Natural killer cell (primary cell): ENCODE measurements at regions of chr19 and their contacts with region 1.

Region 1: GRCh38 chr19:7943444-7944176 is at the start of gene TIMM44:
- DNase-seq: peak; percentile 98 to 99
- ATAC-seq: peak; percentile 93 to 98 (median 94)
- H3K4me3 ChIP-seq: peak within 1 kb of the TSS; percentile 91
- H3K4me3 Mint-ChIP-seq: peak within 1 kb of the TSS; percentile 95
- H3K27ac ChIP-seq: peak within 1 kb of the TSS; percentile 97
- H3K27ac Mint-ChIP-seq: peak within 1 kb of the TSS; percentile 98 to 100
- H3K4me1 ChIP-seq: peaks cover 20% of the 10 kb centered on the region
- H3K4me1 Mint-ChIP-seq: peaks cover 15 to 34% of the 10 kb centered on the region in 2 donors
- H3K27me3 ChIP-seq: no peaks in the 10 kb centered on the region
- H3K27me3 Mint-ChIP-seq: peaks cover 0 to 4% of the 10 kb centered on the region in 2 donors
- CTCF ChIP-seq: no peak
- total RNA-seq, gene TIMM44: 83.3 to 116 (median 89.4) TPM

Region 2: GRCh38 chr19:7903244-7904073 is 40.2 kb before region 1 on chr19 and contains the start of gene MAP2K7:
- intact Hi-C with region 1: loop called (anchors 1 kb)
- DNase-seq: peak; percentile 100
- ATAC-seq: peak; percentile 71 to 87 (median 72)
- H3K4me3 ChIP-seq: peak within 1 kb of the TSS; percentile 62
- H3K4me3 Mint-ChIP-seq: peak within 1 kb of the TSS; percentile 93
- H3K27ac ChIP-seq: peak within 1 kb of the TSS; percentile 88
- H3K27ac Mint-ChIP-seq: peak within 1 kb of the TSS; percentile 95 to 99
- H3K4me1 ChIP-seq: peaks cover 32% of the 10 kb centered on the region
- H3K4me1 Mint-ChIP-seq: peaks cover 20 to 47% of the 10 kb centered on the region in 2 donors
- H3K27me3 ChIP-seq: no peaks in the 10 kb centered on the region
- H3K27me3 Mint-ChIP-seq: peaks cover 0 to 3% of the 10 kb centered on the region in 2 donors
- CTCF ChIP-seq: peak; percentile 57
- total RNA-seq, gene MAP2K7: 131 to 218 (median 159) TPM

Region 3: GRCh38 chr19:7925171-7925851 is 18.3 kb before region 1 on chr19:
- intact Hi-C with region 1: loop called (anchors 2 kb)
- DNase-seq: peak; percentile 80 to 91
- ATAC-seq: peak; percentile 11 to 22 (median 16)
- H3K4me3 ChIP-seq: no peak overlapping the region
- H3K4me3 Mint-ChIP-seq: peak overlapping the region; percentile 85
- H3K27ac ChIP-seq: no peak overlapping the region
- H3K27ac Mint-ChIP-seq: peak overlapping the region in 1 of 2 donors; percentile 74
- H3K4me1 ChIP-seq: peaks cover 35% of the 10 kb centered on the region
- H3K4me1 Mint-ChIP-seq: peaks cover 7 to 35% of the 10 kb centered on the region in 2 donors
- H3K27me3 ChIP-seq: no peaks in the 10 kb centered on the region
- H3K27me3 Mint-ChIP-seq: no peaks in the 10 kb centered on the region
- CTCF ChIP-seq: peak; percentile 83

Region 4: GRCh38 chr19:7973883-7974282 is 30.3 kb after region 1 on chr19:
- intact Hi-C with region 1: no loop called
- DNase-seq: no peak
- ATAC-seq: no peak
- H3K4me3 ChIP-seq: no peak overlapping the region
- H3K4me3 Mint-ChIP-seq: no peak overlapping the region
- H3K27ac ChIP-seq: no peak overlapping the region
- H3K27ac Mint-ChIP-seq: no peak overlapping the region
- H3K4me1 ChIP-seq: no peaks in the 10 kb centered on the region
- H3K4me1 Mint-ChIP-seq: no peaks in the 10 kb centered on the region
- H3K27me3 ChIP-seq: no peaks in the 10 kb centered on the region
- H3K27me3 Mint-ChIP-seq: no peaks in the 10 kb centered on the region
- CTCF ChIP-seq: no peak

Region 5: GRCh38 chr19:8001995-8002849 is 58.6 kb after region 1 on chr19:
- intact Hi-C with region 1: loop called (anchors 1 kb)
- DNase-seq: peak; percentile 77 to 82
- ATAC-seq: peak; percentile 61 to 76 (median 63)
- H3K4me3 ChIP-seq: peak overlapping the region; percentile 26
- H3K4me3 Mint-ChIP-seq: peak overlapping the region; percentile 87
- H3K27ac ChIP-seq: peak overlapping the region; percentile 67
- H3K27ac Mint-ChIP-seq: peak overlapping the region; percentile 93 to 95
- H3K4me1 ChIP-seq: peaks cover 50% of the 10 kb centered on the region
- H3K4me1 Mint-ChIP-seq: peaks cover 43% of the 10 kb centered on the region in 2 donors
- H3K27me3 ChIP-seq: no peaks in the 10 kb centered on the region
- H3K27me3 Mint-ChIP-seq: no peaks in the 10 kb centered on the region
- CTCF ChIP-seq: peak; percentile 98

Region 6: DNA sequence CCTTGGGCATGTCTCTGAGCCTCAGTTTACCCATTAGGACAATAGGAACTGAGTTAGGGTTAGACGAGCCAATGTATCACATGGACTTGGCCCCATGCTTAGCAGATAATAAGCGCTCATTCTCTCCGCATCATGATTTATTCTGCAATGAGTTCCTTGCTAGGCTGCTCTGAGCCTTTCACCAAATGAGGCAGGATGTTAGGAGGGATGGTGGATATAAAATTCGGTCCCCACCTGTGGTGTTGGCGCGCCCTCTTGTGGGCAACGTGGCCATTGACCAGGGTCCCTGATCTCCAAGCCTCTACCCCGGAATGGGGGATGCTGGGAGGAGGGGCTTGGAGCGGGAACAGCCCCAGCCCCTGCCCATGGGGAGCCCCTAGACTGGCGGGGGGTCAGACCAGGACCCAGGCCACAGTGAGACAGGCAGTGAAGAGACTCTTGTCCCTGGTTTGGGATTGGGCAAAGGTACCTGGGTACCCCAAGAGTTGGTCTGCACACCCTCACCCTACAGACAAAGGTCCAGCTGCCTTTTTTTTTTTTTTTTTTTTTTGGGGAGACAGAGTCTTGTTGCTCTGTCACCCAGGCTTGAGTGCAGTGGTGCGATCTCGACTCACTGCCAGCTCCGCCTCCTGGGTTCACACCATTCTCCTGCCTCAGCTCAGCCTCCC is 309.4 kb after region 1 on chr19:
- intact Hi-C with region 1: loop called (anchors 1 kb)
- DNase-seq: peak; percentile 86 to 90
- ATAC-seq: peak; percentile 85 to 98 (median 95)
- H3K4me3 ChIP-seq: no peak overlapping the region
- H3K4me3 Mint-ChIP-seq: no peak overlapping the region
- H3K27ac ChIP-seq: no peak overlapping the region
- H3K27ac Mint-ChIP-seq: peak overlapping the region in 1 of 2 donors; percentile 80
- H3K4me1 ChIP-seq: peaks cover 8% of the 10 kb centered on the region
- H3K4me1 Mint-ChIP-seq: peaks cover 5 to 18% of the 10 kb centered on the region in 2 donors
- H3K27me3 ChIP-seq: no peaks in the 10 kb centered on the region
- H3K27me3 Mint-ChIP-seq: no peaks in the 10 kb centered on the region
- CTCF ChIP-seq: peak; percentile 91